ENCODE measurements at regions of chr18 and their contacts with region 1.

Region 1: GRCh38 chr18:54946149-54946581 is 13.1 kb downstream of the CCDC68 start:
- DNase-seq: peak; percentile 63
- ATAC-seq: peak; percentile 38
- H3K4me3 ChIP-seq: peak overlapping the region; percentile 78
- H3K27ac ChIP-seq: peak overlapping the region; percentile 71
- H3K4me1 ChIP-seq: peaks cover 40% of the 10 kb centered on the region
- H3K27me3 ChIP-seq: no peaks in the 10 kb centered on the region
- CTCF ChIP-seq: no peak

Region 2: GRCh38 chr18:54444319-54444914 is 501.7 kb before region 1 on chr18:
- CTCF ChIA-PET with region 1: no interaction called
- POLR2A ChIA-PET with region 1: no interaction called
- intact Hi-C with region 1: loop called (anchors 1 kb)
- DNase-seq: peak; percentile 76
- ATAC-seq: peak; percentile 82
- H3K4me3 ChIP-seq: no peak overlapping the region
- H3K27ac ChIP-seq: no peak overlapping the region
- H3K4me1 ChIP-seq: no peaks in the 10 kb centered on the region
- H3K27me3 ChIP-seq: no peaks in the 10 kb centered on the region
- CTCF ChIP-seq: peak; percentile 94

Region 3: GRCh38 chr18:54679318-54680149 is 266.6 kb before region 1 on chr18:
- CTCF ChIA-PET with region 1: interaction called, 8 read pairs
- POLR2A ChIA-PET with region 1: no interaction called
- intact Hi-C with region 1: loop called (anchors 1 kb)
- DNase-seq: peak; percentile 88
- ATAC-seq: peak; percentile 93
- H3K4me3 ChIP-seq: no peak overlapping the region
- H3K27ac ChIP-seq: no peak overlapping the region
- H3K4me1 ChIP-seq: no peaks in the 10 kb centered on the region; the same call in 1 of the 2 replicates
- H3K27me3 ChIP-seq: no peaks in the 10 kb centered on the region
- CTCF ChIP-seq: peak; percentile 89

Region 4: GRCh38 chr18:54776282-54776977 is 169.7 kb before region 1 on chr18:
- CTCF ChIA-PET with region 1: no interaction called
- POLR2A ChIA-PET with region 1: no interaction called
- intact Hi-C with region 1: loop called (anchors 1 kb)
- DNase-seq: peak; percentile 97
- ATAC-seq: peak; percentile 90
- H3K4me3 ChIP-seq: no peak overlapping the region; the same call in 1 of the 2 replicates
- H3K27ac ChIP-seq: peak overlapping the region; percentile 98
- H3K4me1 ChIP-seq: peaks cover 43% of the 10 kb centered on the region
- H3K27me3 ChIP-seq: no peaks in the 10 kb centered on the region
- CTCF ChIP-seq: no peak

Region 5: DNA sequence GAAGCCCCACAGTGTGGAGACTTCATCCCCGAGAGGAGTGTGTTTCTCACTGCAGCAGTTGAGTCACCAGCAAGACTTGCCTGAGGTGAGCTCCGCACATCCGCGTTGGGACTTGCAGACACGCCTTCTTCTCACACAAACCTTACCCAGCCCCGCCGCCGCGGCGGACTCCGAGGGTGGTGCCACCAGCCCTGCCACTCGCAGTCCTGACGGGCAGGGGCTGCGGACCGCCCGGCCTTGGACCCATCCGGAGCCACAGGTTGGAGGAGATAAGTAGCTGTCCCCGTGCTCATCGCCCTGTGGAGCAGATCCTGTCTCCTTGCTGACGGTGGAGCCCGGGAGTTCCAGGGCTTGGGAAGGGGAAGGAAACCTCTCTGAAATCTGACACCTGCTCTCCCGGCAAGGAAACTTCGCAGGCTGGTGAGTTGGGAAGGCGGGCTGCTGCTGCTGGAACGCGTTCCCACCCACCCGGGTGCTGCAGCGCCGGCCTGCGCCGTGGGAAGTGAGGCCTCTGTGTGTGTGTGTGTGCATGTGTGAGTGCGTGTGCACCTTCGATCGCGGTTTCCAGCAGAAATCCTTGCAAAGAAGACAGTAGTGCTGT is 117.8 kb before region 1 on chr18 and contains the start of gene RAB27B:
- CTCF ChIA-PET with region 1: no interaction called
- POLR2A ChIA-PET with region 1: interaction called, 3 read pairs
- intact Hi-C with region 1: loop called (anchors 5 kb)
- DNase-seq: peak; percentile 89
- ATAC-seq: peak; percentile 89
- H3K4me3 ChIP-seq: peak within 1 kb of the TSS; percentile 77
- H3K27ac ChIP-seq: peak within 1 kb of the TSS; percentile 94
- H3K4me1 ChIP-seq: peaks cover 50% of the 10 kb centered on the region
- H3K27me3 ChIP-seq: no peaks in the 10 kb centered on the region
- CTCF ChIP-seq: no peak
- total RNA-seq, gene RAB27B: 10.3 and 13.2 TPM in 2 replicates